Activated CD4-positive, alpha-beta memory T cell treated with anti-CD3 and anti-CD28 coated beads, Interleukin-2, amount 10 ng/mL, durations not matched to agents 7 days and 5 days (primary cell): ENCODE measurements at regions of chr6 and their contacts with region 1.

Region 1: GRCh38 chr6:130282234-130282995 is 59.7 kb upstream of the SAMD3 start:
- DNase-seq: peak; percentile 37
- H3K4me3 Mint-ChIP-seq: no peak overlapping the region
- H3K27ac Mint-ChIP-seq: peak overlapping the region; percentile 12
- H3K4me1 Mint-ChIP-seq: peaks cover 12% of the 10 kb centered on the region
- H3K27me3 Mint-ChIP-seq: no peaks in the 10 kb centered on the region

Region 2: DNA sequence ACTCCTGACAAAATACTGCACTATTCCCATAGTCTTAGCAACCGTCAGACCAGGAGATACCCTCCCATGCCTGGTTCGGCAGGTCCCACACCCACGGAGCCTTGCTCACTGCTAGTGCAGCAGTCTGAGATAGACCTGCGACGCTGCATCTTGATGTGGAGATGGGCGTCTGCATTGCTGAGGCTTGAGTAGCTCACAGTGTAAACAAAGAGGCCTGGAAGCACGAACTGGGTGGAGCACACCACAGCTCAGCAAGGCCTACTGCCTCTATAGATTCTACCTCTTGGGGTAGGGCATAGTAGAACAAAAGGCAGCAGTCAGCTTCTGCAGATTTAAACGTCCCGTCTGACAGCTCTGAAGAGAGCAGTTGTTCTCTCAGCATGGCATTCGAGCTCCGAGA is 446.7 kb before region 1 on chr6:
- CTCF ChIA-PET with region 1: no interaction called
- POLR2A ChIA-PET with region 1: no interaction called
- DNase-seq: no peak
- H3K4me3 Mint-ChIP-seq: no peak overlapping the region
- H3K27ac Mint-ChIP-seq: no peak overlapping the region
- H3K4me1 Mint-ChIP-seq: no peaks in the 10 kb centered on the region
- H3K27me3 Mint-ChIP-seq: peaks cover 12% of the 10 kb centered on the region

Region 3: GRCh38 chr6:130047088-130047995 is 235.1 kb before region 1 on chr6:
- CTCF ChIA-PET with region 1: interaction called, 10 read pairs
- POLR2A ChIA-PET with region 1: no interaction called
- DNase-seq: no peak
- H3K4me3 Mint-ChIP-seq: no peak overlapping the region
- H3K27ac Mint-ChIP-seq: no peak overlapping the region
- H3K4me1 Mint-ChIP-seq: no peaks in the 10 kb centered on the region
- H3K27me3 Mint-ChIP-seq: no peaks in the 10 kb centered on the region

Region 4: GRCh38 chr6:130223508-130223907 is 58.9 kb before region 1 on chr6:
- CTCF ChIA-PET with region 1: interaction called, 24 read pairs
- POLR2A ChIA-PET with region 1: interaction called, 3 read pairs
- DNase-seq: peak; percentile 86
- H3K4me3 Mint-ChIP-seq: peak overlapping the region; percentile 26
- H3K27ac Mint-ChIP-seq: peak overlapping the region; percentile 98
- H3K4me1 Mint-ChIP-seq: peaks cover 39% of the 10 kb centered on the region
- H3K27me3 Mint-ChIP-seq: no peaks in the 10 kb centered on the region

Region 5: DNA sequence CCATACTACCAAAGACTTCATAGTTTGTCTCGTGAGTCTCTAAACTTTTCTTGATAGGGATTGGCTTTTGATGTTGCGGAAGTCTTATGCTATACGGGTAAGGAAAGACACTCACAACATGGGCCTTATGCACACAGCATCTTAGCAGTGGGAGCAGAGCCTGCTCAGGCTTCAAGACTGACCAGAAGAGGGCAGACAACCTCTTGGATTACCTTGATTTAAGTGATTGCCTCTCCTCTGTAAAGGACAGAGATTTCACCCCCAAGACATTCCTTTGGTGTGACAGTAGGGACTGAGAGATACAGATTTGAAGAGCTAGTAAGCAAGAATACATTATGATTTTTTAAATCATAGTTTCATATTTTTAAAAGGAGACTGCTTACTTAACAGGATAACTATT is 11.4 kb after region 1 on chr6:
- CTCF ChIA-PET with region 1: interaction called, 10 read pairs
- POLR2A ChIA-PET with region 1: interaction called, 3 read pairs
- DNase-seq: peak; percentile 45
- H3K4me3 Mint-ChIP-seq: no peak overlapping the region
- H3K27ac Mint-ChIP-seq: no peak overlapping the region
- H3K4me1 Mint-ChIP-seq: no peaks in the 10 kb centered on the region
- H3K27me3 Mint-ChIP-seq: peaks cover 9% of the 10 kb centered on the region